Activated CD4-positive, alpha-beta T cell treated with anti-CD3 and anti-CD28 coated beads for 36 hours (primary cell): ENCODE measurements at regions of chr2 and their contacts with region 1.

Region 1: DNA sequence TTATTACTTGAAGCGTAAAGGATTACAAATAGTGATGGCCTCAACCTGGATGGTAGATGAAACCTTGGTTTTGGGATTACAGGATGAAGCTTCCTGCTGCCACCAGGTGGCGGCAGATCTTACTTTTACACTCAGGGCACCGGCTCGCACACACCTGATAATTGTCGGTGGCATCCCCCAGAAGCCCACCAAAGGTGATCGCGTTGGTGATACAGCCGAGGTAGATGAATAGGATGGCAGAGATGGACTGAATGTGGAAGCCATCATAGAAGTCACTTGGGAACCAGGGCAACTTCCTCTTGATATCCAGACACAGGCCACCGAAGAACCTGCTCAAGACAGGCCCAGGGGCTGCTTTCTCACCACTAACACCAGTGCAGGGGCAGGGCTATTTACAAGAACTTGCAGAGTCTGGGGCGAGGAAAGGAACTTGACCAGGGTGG is 51.8 kb downstream of the MTHFD2 start:
- DNase-seq: peak; percentile 75
- ATAC-seq: peak; percentile 78
- H3K4me3 Mint-ChIP-seq: no peak overlapping the region
- H3K27ac Mint-ChIP-seq: no peak overlapping the region
- H3K4me1 Mint-ChIP-seq: no peaks in the 10 kb centered on the region
- H3K27me3 Mint-ChIP-seq: no peaks in the 10 kb centered on the region

Region 2: DNA sequence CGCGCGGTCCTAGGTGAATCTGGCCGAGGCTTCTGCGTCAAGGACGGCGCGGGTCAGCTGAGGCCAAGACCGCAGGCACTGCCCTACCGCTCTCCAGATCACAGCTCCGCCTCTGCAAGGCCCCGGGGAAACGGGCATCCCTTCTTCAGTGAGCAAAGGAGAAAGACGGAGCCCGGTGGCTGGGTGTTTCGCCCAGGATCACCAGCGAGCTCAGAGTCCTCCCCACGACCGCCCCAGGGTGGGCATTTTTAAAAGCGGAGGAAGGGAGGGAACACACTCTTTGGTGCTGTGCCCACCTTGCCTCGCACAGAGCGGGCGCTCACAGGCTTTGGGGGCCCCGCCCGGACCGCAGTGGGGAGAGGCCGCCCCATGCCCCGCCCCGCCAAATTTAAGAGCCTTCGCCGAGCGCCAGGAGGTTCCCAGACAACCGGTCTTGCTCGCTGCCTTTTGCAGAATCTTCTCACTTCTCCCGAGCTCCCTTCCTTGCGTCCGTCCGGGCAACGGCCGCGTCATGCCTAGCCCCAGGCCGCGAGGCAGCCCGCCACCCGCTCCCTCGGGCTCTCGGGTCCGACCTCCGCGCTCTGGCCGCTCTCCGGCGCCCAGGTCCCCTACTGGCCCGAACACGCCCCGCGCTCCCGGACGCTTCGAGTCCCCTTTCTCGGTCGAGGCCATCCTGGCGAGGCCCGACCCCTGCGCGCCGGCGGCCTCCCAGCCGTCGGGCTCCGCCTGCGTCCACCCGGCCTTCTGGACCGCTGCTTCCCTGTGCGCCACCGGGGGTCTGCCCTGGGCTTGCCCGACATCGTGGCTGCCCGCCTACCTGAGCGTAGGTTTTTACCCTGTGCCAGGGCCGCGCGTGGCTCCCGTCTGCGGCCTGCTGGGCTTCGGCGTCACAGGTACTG is 1047.8 kb before region 1 on chr2 and contains the start of gene NOTO:
- CTCF ChIA-PET with region 1: no interaction called
- POLR2A ChIA-PET with region 1: no interaction called
- intact Hi-C with region 1: no loop called
- DNase-seq: peak; percentile 26
- ATAC-seq: peak; percentile 16
- H3K4me3 Mint-ChIP-seq: no peak within 1 kb of the TSS
- H3K27ac Mint-ChIP-seq: no peak within 1 kb of the TSS
- H3K4me1 Mint-ChIP-seq: peaks cover 4% of the 10 kb centered on the region
- H3K27me3 Mint-ChIP-seq: peaks cover 50% of the 10 kb centered on the region
- total RNA-seq, gene NOTO: not detected

Region 3: DNA sequence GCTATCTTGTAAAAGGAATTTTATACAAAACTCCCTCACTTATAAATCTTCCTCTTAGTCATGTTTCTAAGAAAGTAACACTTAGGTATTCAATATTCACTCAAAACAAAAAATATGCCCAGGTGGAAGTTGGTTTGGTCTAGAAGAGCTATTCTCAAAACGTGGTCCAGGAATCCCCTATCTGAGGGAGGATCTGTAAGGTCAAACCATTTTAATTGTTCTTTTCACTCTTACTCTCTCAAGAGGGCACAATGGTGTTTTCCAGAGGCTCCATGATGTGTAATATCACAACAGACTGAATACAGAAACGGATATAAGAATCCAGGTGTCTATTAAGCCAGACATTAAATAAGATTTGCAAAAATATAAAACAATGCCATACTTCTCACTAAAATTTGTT is 81.5 kb before region 1 on chr2:
- CTCF ChIA-PET with region 1: no interaction called
- POLR2A ChIA-PET with region 1: no interaction called
- intact Hi-C with region 1: no loop called
- DNase-seq: no peak
- ATAC-seq: peak; percentile 74
- H3K4me3 Mint-ChIP-seq: no peak overlapping the region
- H3K27ac Mint-ChIP-seq: peak overlapping the region; percentile 59
- H3K4me1 Mint-ChIP-seq: peaks cover 21% of the 10 kb centered on the region
- H3K27me3 Mint-ChIP-seq: no peaks in the 10 kb centered on the region

Region 4: DNA sequence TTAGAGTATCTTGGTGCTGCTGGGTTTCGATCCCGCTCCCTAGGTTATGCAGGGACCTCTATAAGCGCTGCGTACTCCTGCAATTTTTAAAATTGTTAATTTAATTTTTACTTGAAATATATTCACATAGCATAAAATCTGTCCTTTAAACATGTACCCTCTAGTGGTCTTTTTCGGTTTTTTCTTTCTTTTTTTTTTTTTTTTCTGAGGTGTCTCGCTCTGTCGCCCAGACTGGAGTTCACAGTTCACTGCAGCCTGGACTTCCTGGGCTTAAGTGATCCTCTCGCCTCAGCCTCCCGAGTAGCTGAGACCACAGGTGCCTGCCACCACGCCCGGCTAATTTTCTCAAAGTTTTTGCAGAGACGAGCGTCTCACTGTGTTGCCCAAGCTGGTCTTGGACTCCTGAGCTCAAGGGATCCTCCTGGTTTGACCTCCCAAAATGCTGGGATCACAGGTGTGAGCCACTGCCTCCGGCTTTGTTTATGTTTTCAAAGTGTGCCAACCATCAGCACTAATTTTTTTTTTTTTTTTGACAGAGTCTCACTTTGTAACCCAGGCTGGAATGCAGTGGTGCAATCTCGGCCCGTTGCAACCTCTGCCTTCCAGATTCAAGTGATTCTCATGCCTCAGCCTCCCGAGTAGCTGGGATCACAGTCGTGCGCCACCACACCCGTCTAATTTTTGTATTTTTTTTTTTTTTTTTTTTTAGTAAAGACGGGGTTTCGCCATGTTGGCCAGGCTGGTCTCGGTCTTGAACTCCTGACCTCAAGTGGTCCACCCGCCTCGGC is 71.0 kb before region 1 on chr2:
- CTCF ChIA-PET with region 1: no interaction called
- POLR2A ChIA-PET with region 1: no interaction called
- intact Hi-C with region 1: no loop called
- DNase-seq: peak; percentile 27
- ATAC-seq: peak; percentile 40
- H3K4me3 Mint-ChIP-seq: peak overlapping the region; percentile 82
- H3K27ac Mint-ChIP-seq: peak overlapping the region; percentile 86
- H3K4me1 Mint-ChIP-seq: peaks cover 43% of the 10 kb centered on the region
- H3K27me3 Mint-ChIP-seq: no peaks in the 10 kb centered on the region

Region 5: GRCh38 chr2:74267068-74267467 is 16.9 kb after region 1 on chr2:
- CTCF ChIA-PET with region 1: interaction called, 10 read pairs
- POLR2A ChIA-PET with region 1: no interaction called
- intact Hi-C with region 1: no loop called
- DNase-seq: peak; percentile 79
- ATAC-seq: peak; percentile 100
- H3K4me3 Mint-ChIP-seq: no peak overlapping the region
- H3K27ac Mint-ChIP-seq: peak overlapping the region; percentile 83
- H3K4me1 Mint-ChIP-seq: peaks cover 9% of the 10 kb centered on the region
- H3K27me3 Mint-ChIP-seq: no peaks in the 10 kb centered on the region

Region 6: GRCh38 chr2:74345272-74345943 is 95.2 kb after region 1 on chr2:
- CTCF ChIA-PET with region 1: interaction called, 32 read pairs
- POLR2A ChIA-PET with region 1: no interaction called
- intact Hi-C with region 1: no loop called
- DNase-seq: no peak
- ATAC-seq: no peak
- H3K4me3 Mint-ChIP-seq: no peak overlapping the region
- H3K27ac Mint-ChIP-seq: no peak overlapping the region
- H3K4me1 Mint-ChIP-seq: no peaks in the 10 kb centered on the region
- H3K27me3 Mint-ChIP-seq: no peaks in the 10 kb centered on the region

Region 7: GRCh38 chr2:74374509-74375205 is 124.4 kb after region 1 on chr2:
- CTCF ChIA-PET with region 1: no interaction called
- POLR2A ChIA-PET with region 1: no interaction called
- intact Hi-C with region 1: no loop called
- DNase-seq: no peak
- ATAC-seq: no peak
- H3K4me3 Mint-ChIP-seq: no peak overlapping the region
- H3K27ac Mint-ChIP-seq: no peak overlapping the region
- H3K4me1 Mint-ChIP-seq: peaks cover 2% of the 10 kb centered on the region
- H3K27me3 Mint-ChIP-seq: no peaks in the 10 kb centered on the region

Region 8: DNA sequence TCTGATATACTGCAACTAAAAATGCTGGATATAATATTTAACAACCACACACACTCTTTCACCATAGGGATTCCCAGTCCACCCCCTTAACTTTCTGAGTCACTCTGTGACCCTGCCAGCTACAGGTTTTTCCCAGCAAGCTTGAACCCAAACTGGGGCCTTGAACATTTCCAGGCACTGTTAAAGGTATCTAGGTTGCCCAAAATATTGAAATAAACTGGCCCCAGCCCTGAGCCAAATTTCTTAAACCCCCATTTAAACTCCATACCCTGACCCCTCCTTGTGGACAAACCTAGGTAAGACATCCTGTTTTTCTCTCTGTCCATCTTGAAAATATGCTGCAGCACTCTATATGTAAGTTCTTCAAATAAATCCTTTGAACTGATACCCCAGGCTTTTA is 149.6 kb after region 1 on chr2:
- CTCF ChIA-PET with region 1: interaction called, 18 read pairs
- POLR2A ChIA-PET with region 1: no interaction called
- intact Hi-C with region 1: loop called (anchors 1 kb)
- DNase-seq: no peak
- ATAC-seq: peak; percentile 76
- H3K4me3 Mint-ChIP-seq: no peak overlapping the region
- H3K27ac Mint-ChIP-seq: no peak overlapping the region
- H3K4me1 Mint-ChIP-seq: no peaks in the 10 kb centered on the region
- H3K27me3 Mint-ChIP-seq: peaks cover 2% of the 10 kb centered on the region